Uterus (tissue), 4 donors: ENCODE measurements at regions of chr15 and their contacts with region 1.

Region 1: GRCh38 chr15:80152180-80152845 is 486 bp upstream of the FAH start:
- DNase-seq: peak; percentile 97 to 99
- H3K4me3 ChIP-seq: peak overlapping the region; percentile 76 to 81
- H3K27ac ChIP-seq: peak overlapping the region; percentile 77 to 91
- H3K4me1 ChIP-seq: peaks cover 0 to 3% of the 10 kb centered on the region in 2 donors
- H3K27me3 ChIP-seq: no peaks in the 10 kb centered on the region
- CTCF ChIP-seq: no peak
- POLR2A ChIP-seq: no peak

Region 2: GRCh38 chr15:79101866-79102578 is 1050.3 kb before region 1 on chr15:
- intact Hi-C with region 1: no loop called
- DNase-seq: no peak
- H3K4me3 ChIP-seq: no peak overlapping the region
- H3K27ac ChIP-seq: no peak overlapping the region
- H3K4me1 ChIP-seq: no peaks in the 10 kb centered on the region
- H3K27me3 ChIP-seq: peaks cover 0 to 5% of the 10 kb centered on the region in 2 donors
- CTCF ChIP-seq: no peak
- POLR2A ChIP-seq: no peak

Region 3: GRCh38 chr15:79724312-79724711 is 428.0 kb before region 1 on chr15:
- intact Hi-C with region 1: no loop called
- DNase-seq: no peak
- H3K4me3 ChIP-seq: no peak overlapping the region
- H3K27ac ChIP-seq: no peak overlapping the region
- H3K4me1 ChIP-seq: no peaks in the 10 kb centered on the region
- H3K27me3 ChIP-seq: no peaks in the 10 kb centered on the region
- CTCF ChIP-seq: no peak
- POLR2A ChIP-seq: no peak

Region 4: DNA sequence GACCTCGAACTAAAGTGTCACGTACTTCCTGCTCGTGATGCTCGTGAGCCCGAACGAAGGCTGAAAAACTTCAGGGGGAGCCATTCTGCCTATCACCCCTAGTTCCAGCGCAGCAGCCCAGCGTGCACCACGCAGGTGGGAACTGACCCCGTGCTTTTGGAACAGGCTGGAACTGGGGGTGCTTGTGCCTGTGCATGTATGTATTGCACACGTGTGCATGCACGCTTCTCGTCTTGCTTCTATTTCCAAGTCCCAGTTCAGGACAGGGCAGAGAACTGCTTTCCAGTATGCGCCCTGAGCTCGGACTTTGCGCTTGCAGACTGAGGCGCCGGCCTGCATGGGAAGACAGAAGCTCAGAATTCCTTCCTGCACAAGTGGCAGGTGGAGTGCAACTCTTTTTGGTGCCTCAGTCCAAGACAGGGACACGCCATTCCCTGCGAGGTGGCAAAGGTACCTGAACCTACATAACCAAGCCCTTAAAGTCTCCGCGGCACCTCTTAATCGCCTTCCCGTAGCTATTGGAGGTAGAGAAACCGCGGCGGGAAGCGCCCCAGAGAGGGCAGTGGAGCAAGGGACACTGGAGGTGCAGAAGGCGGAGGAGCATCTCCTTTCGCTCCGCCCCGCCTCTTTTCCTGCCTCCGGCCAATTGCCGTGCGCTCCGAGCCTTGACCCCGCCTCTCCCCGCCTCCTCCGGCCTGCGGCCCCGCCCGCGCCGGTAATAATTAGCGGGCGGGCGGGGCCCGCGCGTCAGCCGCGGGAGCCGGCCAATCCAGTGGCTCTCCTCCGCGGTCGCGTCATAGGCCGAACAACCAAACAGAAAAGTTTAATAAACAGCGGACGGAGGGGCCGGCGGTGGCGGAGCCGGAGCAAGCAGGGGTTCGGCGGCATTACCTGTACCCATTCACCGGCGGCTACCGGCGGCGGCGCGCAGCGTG is 93.2 kb before region 1 on chr15 and contains the start of gene ZFAND6:
- intact Hi-C with region 1: loop called (anchors 2 kb)
- DNase-seq: peak; percentile 94 to 96
- H3K4me3 ChIP-seq: peak within 1 kb of the TSS; percentile 38 to 98
- H3K27ac ChIP-seq: peak within 1 kb of the TSS; percentile 93 to 98
- H3K4me1 ChIP-seq: peaks cover 3 to 5% of the 10 kb centered on the region in 2 donors
- H3K27me3 ChIP-seq: no peaks in the 10 kb centered on the region
- CTCF ChIP-seq: peak in 3 of 4 experiments; percentile 17 to 25 (median 19)
- POLR2A ChIP-seq: peak; percentile 68 to 91
- total RNA-seq, gene ZFAND6: 119 to 452 (median 172) TPM

Region 5: DNA sequence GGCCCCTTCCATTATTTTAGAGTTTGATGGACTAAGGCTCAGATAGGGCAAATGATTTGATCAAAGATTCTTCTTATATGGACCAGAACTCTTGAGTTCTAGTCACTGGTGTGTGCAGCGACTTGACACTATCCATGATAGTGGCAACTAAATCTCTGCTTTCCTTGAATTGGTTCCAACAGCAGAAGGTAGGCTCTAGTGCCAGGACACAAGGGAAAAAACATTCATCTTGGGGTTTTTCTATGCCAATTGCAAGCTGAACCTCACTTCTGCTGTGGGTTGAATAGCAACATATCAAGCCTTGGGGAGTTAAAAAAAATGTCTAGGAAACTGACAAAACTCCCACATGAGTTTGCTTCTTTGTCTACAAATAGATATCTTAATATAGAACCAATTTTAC is 64.6 kb after region 1 on chr15:
- intact Hi-C with region 1: no loop called
- DNase-seq: no peak
- H3K4me3 ChIP-seq: no peak overlapping the region
- H3K27ac ChIP-seq: no peak overlapping the region
- H3K4me1 ChIP-seq: no peaks in the 10 kb centered on the region
- H3K27me3 ChIP-seq: no peaks in the 10 kb centered on the region
- CTCF ChIP-seq: no peak
- POLR2A ChIP-seq: no peak

Region 6: DNA sequence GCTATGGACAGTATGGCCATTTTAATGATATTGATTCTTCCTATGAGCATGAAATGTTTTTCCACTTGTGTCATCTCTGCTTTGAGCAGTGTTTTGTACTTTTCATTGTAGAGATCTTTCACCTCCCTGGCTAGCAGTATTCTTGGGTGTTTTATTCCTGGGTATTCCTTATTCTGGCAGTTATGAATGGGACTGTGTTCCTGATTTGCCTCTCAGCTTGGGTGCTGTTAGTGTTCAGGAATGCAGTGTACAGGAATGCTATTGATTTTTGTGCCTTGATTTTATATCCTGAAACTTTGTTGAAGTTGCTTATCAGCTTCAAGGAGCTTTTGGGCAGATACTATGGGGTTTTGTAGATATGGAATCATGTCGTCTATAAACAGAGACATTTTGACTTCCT is 149.2 kb after region 1 on chr15:
- intact Hi-C with region 1: no loop called
- DNase-seq: no peak
- H3K4me3 ChIP-seq: no peak overlapping the region
- H3K27ac ChIP-seq: no peak overlapping the region
- H3K4me1 ChIP-seq: no peaks in the 10 kb centered on the region
- H3K27me3 ChIP-seq: no peaks in the 10 kb centered on the region
- CTCF ChIP-seq: no peak
- POLR2A ChIP-seq: no peak